H1 (cell line): ENCODE measurements at regions of chr2 and their contacts with region 1.

Region 1: GRCh38 chr2:33412920-33413319 is 63.5 kb upstream of the RASGRP3 start:
- DNase-seq: no peak
- H3K4me3 ChIP-seq: no peak overlapping the region
- H3K27ac ChIP-seq: no peak overlapping the region
- H3K4me1 ChIP-seq: no peaks in the 10 kb centered on the region
- H3K27me3 ChIP-seq: no peaks in the 10 kb centered on the region; a peak in 1 of 7 replicates
- CTCF ChIP-seq: peak in 2 of 3 experiments; percentile 31 to 52; a peak in 3 of 4 replicates
- EP300 ChIP-seq: no peak
- POLR2A ChIP-seq: no peak
- RAD21 ChIP-seq: peak; percentile 58 to 66

Region 2: GRCh38 chr2:33395655-33396249 is 17.2 kb before region 1 on chr2:
- CTCF ChIA-PET with region 1: interaction called, 13 read pairs
- POLR2A ChIA-PET with region 1: no interaction called
- DNase-seq: peak in 1 of 2 experiments; percentile 64
- H3K4me3 ChIP-seq: no peak overlapping the region
- H3K27ac ChIP-seq: no peak overlapping the region
- H3K4me1 ChIP-seq: peaks cover 0 to 5% (median 1%) of the 10 kb centered on the region in 4 experiments; a peak in 1 of 7 replicates
- H3K27me3 ChIP-seq: peaks cover 0 to 4% (median 3%) of the 10 kb centered on the region in 4 experiments; a peak in 2 of 7 replicates
- CTCF ChIP-seq: peak in 2 of 3 experiments; percentile 51 to 55; a peak in 2 of 4 replicates
- EP300 ChIP-seq: no peak
- POLR2A ChIP-seq: no peak
- RAD21 ChIP-seq: peak; percentile 51 to 58

Region 3: GRCh38 chr2:33433279-33434235 is 20.6 kb after region 1 on chr2:
- CTCF ChIA-PET with region 1: interaction called, 11 read pairs
- POLR2A ChIA-PET with region 1: interaction called, 3 read pairs
- DNase-seq: no peak
- H3K4me3 ChIP-seq: no peak overlapping the region
- H3K27ac ChIP-seq: no peak overlapping the region
- H3K4me1 ChIP-seq: no peaks in the 10 kb centered on the region
- H3K27me3 ChIP-seq: no peaks in the 10 kb centered on the region
- CTCF ChIP-seq: no peak
- EP300 ChIP-seq: no peak
- POLR2A ChIP-seq: no peak
- RAD21 ChIP-seq: no peak